ENCODE measurements at regions of chr12 and their contacts with region 1.

Region 1: GRCh38 chr12:29519585-29520182 is 22.2 kb upstream of the OVCH1 start:
- DNase-seq: no peak
- H3K4me3 ChIP-seq: no peak overlapping the region
- CTCF ChIP-seq: peak; percentile 9

Region 2: DNA sequence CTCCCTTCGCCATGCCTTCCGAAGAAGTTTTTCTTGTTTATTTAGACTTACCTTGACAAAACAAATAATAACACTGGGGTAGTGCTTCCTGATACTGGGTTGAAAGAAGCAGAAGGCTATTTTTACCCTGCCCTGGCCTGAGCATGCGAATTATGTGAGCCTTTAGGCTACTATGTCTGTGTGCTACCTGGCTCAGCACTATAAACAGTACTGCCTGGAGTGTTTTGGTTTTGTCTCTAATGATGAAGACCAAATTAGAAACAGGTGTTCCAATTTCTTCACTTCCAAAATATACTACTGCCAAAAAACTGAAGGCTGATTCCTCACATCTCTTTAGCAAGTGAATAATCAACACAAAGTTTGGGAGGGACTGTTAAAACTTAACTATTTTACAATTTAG is 14.6 kb before region 1 on chr12:
- CTCF ChIA-PET with region 1: interaction called, 17 read pairs
- POLR2A ChIA-PET with region 1: no interaction called
- DNase-seq: no peak
- H3K4me3 ChIP-seq: no peak overlapping the region
- CTCF ChIP-seq: no peak

Region 3: DNA sequence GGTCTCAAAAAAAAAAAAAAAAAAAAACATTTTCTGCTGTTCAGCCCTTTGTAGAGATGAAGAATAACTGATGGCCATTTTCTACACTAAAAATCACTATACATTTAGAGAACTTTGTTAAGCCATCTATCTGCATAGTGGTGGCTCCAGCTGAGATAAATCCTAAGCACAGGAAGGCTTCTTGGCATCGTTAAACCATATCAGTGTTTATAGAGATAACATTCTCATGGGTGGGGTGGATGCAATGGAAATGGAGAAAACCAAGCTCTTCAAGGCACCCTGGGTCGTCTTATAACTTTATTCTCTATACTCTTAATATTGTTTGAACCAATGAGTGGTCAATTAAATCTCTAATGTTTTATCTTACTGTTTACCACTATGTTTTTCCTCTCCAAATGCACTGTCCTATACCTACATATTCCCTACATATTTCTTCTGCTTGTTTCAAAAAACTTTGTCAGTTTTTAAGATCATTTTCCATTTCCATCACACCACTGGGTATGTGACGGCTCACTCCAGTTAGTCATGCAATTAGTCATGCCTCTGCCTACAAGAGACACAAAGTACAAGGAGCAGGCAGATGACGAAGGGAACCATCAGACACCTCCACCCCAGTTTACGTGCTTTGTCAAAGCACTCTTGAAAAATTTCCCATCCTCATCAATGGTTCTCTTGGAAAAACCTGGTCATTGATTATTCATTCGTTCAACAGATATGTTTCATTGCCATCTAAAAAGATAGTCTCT is 97.2 kb after region 1 on chr12:
- CTCF ChIA-PET with region 1: no interaction called
- POLR2A ChIA-PET with region 1: no interaction called
- DNase-seq: no peak
- H3K4me3 ChIP-seq: no peak overlapping the region
- CTCF ChIP-seq: no peak

Region 4: GRCh38 chr12:30286345-30286926 is 766.8 kb after region 1 on chr12:
- CTCF ChIA-PET with region 1: interaction called, 11 read pairs
- POLR2A ChIA-PET with region 1: no interaction called
- DNase-seq: no peak
- H3K4me3 ChIP-seq: no peak overlapping the region
- CTCF ChIP-seq: peak; percentile 39